ENCODE measurements at regions of chr19 and their contacts with region 1.

Region 1: GRCh38 chr19:46704379-46705076 is 12.4 kb downstream of the PRKD2 start:
- DNase-seq: peak; percentile 65
- H3K4me3 Mint-ChIP-seq: no peak overlapping the region
- H3K27ac Mint-ChIP-seq: no peak overlapping the region
- H3K4me1 Mint-ChIP-seq: peaks cover 6% of the 10 kb centered on the region
- H3K27me3 Mint-ChIP-seq: no peaks in the 10 kb centered on the region
- CTCF ChIP-seq: peak; percentile 96

Region 2: GRCh38 chr19:46685189-46685588 is 19.3 kb before region 1 on chr19:
- CTCF ChIA-PET with region 1: interaction called, 17 read pairs
- POLR2A ChIA-PET with region 1: interaction called, 3 read pairs
- intact Hi-C with region 1: no loop called
- DNase-seq: no peak
- H3K4me3 Mint-ChIP-seq: no peak overlapping the region
- H3K27ac Mint-ChIP-seq: no peak overlapping the region
- H3K4me1 Mint-ChIP-seq: no peaks in the 10 kb centered on the region
- H3K27me3 Mint-ChIP-seq: no peaks in the 10 kb centered on the region
- CTCF ChIP-seq: no peak

Region 3: DNA sequence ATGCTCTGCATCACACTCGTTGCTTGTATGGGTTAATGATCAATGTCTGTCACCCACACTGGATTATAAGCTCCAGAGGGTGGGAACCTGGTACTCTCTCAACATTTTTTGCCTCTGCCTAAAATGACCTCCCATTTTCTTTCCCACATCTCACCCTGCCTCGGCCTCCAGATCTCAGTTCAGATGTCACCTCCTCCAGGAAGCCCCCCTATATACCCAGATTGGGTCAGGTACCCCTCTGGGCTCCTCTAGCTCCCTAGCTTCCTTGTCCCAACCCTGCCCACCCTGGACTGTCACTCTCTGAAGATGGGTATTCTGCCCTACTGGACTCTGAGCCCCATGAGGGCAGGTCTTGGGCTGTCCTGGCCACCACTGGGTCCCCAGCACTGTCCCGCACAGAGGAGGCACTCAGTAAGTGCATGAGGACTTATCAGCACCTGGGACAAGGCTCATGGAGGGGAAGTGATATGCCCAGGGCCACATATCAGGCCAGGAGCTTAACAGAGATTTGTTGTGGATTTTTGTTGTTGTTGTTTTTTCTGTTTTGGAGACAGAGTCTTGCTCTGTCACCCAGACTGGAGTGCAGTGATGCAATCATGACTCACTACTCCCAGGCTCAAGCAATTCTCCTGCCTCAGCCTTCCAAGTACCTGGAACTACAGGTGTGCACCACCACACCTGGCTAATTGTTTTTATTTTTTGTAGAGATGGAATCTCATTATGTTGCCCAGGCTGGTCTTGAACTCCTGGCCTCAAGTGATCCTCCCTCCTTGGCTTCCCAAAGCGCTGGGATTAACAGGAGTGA is 11.4 kb before region 1 on chr19:
- CTCF ChIA-PET with region 1: interaction called, 27 read pairs
- POLR2A ChIA-PET with region 1: interaction called, 3 read pairs
- intact Hi-C with region 1: no loop called
- DNase-seq: peak; percentile 25
- H3K4me3 Mint-ChIP-seq: no peak overlapping the region
- H3K27ac Mint-ChIP-seq: peak overlapping the region; percentile 74
- H3K4me1 Mint-ChIP-seq: no peaks in the 10 kb centered on the region
- H3K27me3 Mint-ChIP-seq: no peaks in the 10 kb centered on the region
- CTCF ChIP-seq: no peak

Region 4: GRCh38 chr19:46717034-46717723 is 12.7 kb after region 1 on chr19 and contains the start of gene PRKD2:
- CTCF ChIA-PET with region 1: interaction called, 25 read pairs
- POLR2A ChIA-PET with region 1: interaction called, 6 read pairs
- intact Hi-C with region 1: no loop called
- DNase-seq: peak; percentile 76
- H3K4me3 Mint-ChIP-seq: peak within 1 kb of the TSS; percentile 97
- H3K27ac Mint-ChIP-seq: peak within 1 kb of the TSS; percentile 99
- H3K4me1 Mint-ChIP-seq: no peaks in the 10 kb centered on the region
- H3K27me3 Mint-ChIP-seq: no peaks in the 10 kb centered on the region
- CTCF ChIP-seq: no peak
- total RNA-seq, gene PRKD2: 30.4 and 35.9 TPM in 2 replicates

Region 5: DNA sequence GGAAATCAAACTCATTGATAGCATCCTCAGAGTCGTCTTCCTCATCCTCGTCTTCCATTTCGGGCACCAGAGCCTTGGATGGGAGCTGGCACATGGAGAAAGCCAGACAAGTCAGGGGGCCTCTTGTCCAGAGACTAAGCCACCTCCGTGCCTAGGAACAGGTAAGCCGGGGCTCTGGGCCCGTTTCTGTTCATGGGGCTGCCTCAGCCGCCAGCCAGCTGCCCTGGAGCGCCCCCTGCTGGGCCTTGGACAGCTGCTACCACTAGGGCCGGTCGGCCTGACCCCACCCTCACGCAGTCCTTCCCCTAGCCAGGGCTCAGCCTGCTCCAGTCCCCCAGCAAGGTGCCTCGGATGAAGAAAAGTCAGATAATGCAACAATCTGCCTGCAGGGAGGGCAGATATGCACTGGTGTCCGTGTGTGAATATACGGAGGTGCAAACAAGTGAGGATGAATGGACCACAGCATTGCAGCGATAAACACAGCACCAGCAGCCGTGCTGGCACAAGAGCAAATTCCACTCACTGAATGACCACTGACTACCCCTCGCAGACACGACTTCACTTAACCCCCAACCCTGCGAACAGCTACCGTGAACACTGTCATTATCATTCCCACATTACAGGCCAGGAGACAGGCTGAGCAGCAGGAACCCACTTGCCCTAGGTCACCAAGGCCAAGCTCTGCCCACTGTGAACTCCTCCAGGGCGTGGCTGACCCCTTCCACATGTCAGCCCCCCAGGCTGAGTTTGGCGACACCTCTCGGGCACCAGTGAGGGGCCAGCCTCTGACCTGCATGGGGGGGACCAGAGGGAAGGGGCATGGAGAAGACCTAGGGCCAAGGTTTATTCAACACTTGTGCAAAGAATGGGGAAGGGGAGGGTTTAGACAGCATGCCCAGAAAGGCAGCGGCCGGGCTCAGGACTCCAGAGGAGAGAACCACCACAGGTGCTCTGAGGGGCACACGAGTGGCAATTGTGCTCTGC is 24.5 kb after region 1 on chr19:
- CTCF ChIA-PET with region 1: interaction called, 13 read pairs
- POLR2A ChIA-PET with region 1: no interaction called
- intact Hi-C with region 1: no loop called
- DNase-seq: peak; percentile 62
- H3K4me3 Mint-ChIP-seq: no peak overlapping the region
- H3K27ac Mint-ChIP-seq: no peak overlapping the region
- H3K4me1 Mint-ChIP-seq: peaks cover 10% of the 10 kb centered on the region
- H3K27me3 Mint-ChIP-seq: no peaks in the 10 kb centered on the region
- CTCF ChIP-seq: peak; percentile 86